IMR-90 (cell line): ENCODE measurements at regions of chr1 and their contacts with region 1.

Region 1: DNA sequence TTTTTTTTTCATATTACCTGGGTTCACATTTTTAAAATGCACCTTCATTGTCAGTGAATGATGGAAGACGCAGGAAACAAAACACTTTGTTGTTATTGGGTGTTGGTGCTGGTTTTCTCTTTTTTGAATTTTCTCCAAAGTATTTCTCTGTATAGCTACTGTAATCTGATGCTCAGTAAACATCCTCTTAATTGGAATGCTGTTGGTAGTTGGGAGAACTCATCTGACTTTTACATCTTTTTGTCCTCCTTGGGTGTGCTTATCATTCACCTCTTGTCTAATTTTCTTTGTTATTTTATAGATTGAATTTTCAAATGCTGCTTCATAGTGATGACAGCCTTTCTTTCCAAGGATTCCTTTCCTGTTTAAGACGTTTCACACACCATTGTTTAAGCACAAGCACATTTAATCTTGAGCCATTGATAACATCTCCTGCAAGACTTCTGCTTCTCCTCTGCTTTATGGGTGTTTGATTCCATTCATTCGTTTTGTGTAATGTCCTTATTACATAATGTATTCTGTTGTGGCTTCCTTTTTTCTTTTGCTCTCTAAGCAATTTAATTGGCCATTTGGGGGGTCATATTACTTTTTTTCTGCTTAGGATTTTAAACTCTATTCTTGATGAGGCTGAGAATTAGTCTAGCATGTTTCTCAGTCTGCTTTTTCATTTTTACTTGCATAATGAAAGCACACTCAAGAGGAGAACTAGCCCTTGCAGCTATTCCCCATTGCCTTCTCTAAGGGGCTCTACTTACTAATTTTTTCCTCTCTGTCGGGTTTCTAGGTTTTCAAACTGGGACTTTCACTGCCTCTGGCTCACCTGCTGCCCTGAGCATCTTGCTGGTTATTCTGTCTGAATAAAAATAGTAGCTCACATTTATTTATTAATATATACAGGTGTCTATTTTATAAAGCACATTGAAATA is 42.0 kb upstream of the CD34 start:
- DNase-seq: no peak
- ATAC-seq: no peak
- H3K4me3 ChIP-seq: no peak overlapping the region
- H3K27ac ChIP-seq: no peak overlapping the region
- H3K4me1 ChIP-seq: no peaks in the 10 kb centered on the region
- H3K27me3 ChIP-seq: peaks cover 38% of the 10 kb centered on the region
- CTCF ChIP-seq: no peak
- POLR2A ChIP-seq: no peak
- RAD21 ChIP-seq: no peak

Region 2: DNA sequence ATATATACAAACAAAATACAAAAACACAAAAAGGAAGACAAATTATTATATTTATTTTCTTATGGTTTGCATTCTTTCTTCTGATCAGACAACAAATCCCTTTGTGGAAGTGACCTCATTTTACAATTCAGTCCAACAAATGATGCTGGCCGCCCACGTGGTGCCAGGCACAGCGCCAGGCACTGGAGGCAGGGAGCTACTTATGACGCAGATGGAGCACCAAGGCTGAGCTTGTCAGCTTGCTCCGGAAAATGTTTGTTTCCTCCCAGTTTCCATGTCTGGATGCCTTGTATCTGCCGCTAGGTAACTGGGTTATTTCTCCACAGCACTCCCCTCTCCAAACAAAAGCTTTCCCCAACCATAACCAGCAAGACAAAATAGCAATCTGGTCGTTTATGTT is 11.2 kb before region 1 on chr1:
- CTCF ChIA-PET with region 1: interaction called, 12 read pairs
- POLR2A ChIA-PET with region 1: no interaction called
- dilution Hi-C with region 1: no loop called
- in situ Hi-C with region 1: no loop called
- intact Hi-C with region 1: no loop called
- DNase-seq: peak; percentile 50
- ATAC-seq: no peak
- H3K4me3 ChIP-seq: no peak overlapping the region
- H3K27ac ChIP-seq: no peak overlapping the region
- H3K4me1 ChIP-seq: no peaks in the 10 kb centered on the region
- H3K27me3 ChIP-seq: no peaks in the 10 kb centered on the region; the same call in 1 of the 2 replicates
- CTCF ChIP-seq: no peak
- POLR2A ChIP-seq: no peak
- RAD21 ChIP-seq: no peak